ENCODE measurements at regions of chr17 and their contacts with region 1.

Region 1: DNA sequence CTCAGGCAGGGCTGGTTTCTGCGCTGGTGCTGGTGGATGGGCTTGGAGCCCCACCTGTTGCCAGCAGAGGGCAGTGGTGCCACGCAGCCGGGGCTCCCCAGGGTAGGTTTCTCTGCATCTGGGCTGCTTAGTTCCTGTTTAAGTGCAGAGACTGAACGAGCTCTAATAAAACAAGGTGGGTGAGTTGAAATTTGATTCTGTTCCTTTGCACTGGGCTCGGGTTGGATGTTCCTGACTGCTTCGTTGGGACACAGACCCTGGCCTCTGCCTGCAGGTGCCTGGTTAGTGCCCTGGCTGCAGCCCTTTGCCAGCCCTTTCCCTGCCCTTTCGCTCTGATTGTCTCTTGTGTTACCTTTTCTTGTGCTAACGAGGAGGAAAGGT is 30.0 kb downstream of the TBCD start:
- DNase-seq: peak; percentile 77
- H3K4me3 Mint-ChIP-seq: no peak overlapping the region
- H3K27ac Mint-ChIP-seq: no peak overlapping the region
- H3K4me1 Mint-ChIP-seq: peaks cover 10% of the 10 kb centered on the region
- H3K27me3 Mint-ChIP-seq: no peaks in the 10 kb centered on the region

Region 2: DNA sequence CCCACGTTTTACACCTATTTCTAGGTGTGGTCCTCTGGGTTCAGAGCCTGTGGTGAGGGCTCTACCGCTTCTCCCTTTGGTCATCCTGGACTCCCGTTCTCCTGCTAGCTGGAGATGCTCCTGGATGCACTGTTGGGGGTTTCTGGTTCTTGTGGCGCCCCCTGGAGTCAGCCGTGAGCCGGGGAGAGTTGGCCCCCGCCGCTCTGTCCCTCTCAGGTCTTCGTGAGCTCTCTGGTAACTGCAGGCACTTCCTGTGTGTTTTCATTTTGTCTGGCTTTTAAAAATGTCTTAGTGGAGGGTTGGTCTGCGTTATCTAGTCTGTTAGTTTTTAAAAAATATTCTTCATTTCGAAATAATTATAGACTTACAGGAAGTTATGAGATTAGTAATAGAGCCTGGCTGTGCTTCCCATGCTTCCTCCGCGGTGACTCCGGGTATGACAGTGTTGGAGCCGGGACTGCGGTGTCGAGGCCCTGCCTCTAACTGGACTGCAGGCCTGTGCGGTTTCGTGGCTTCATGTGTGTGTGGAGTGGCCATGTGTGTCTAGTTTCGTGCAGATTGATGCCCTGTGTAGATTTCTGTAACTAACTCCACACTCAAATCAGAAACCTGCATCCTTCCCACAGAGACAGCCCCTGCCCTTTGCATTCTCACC is 135.9 kb after region 1 on chr17:
- intact Hi-C with region 1: loop called (anchors 2 kb)
- DNase-seq: no peak
- H3K4me3 Mint-ChIP-seq: no peak overlapping the region
- H3K27ac Mint-ChIP-seq: no peak overlapping the region
- H3K4me1 Mint-ChIP-seq: peaks cover 9% of the 10 kb centered on the region
- H3K27me3 Mint-ChIP-seq: no peaks in the 10 kb centered on the region

Region 3: GRCh38 chr17:83174285-83175118 is 392.6 kb after region 1 on chr17:
- intact Hi-C with region 1: no loop called
- DNase-seq: no peak
- H3K4me3 Mint-ChIP-seq: no peak overlapping the region
- H3K27ac Mint-ChIP-seq: no peak overlapping the region
- H3K4me1 Mint-ChIP-seq: no peaks in the 10 kb centered on the region
- H3K27me3 Mint-ChIP-seq: peaks cover 14% of the 10 kb centered on the region